Activated naive CD4-positive, alpha-beta T cell treated with anti-CD3 and anti-CD28 coated beads, Interleukin-2, amount 10 ng/mL, durations not matched to agents 7 days and 5 days (primary cell): ENCODE measurements at regions of chr1 and their contacts with region 1.

Region 1: GRCh38 chr1:67766141-67766978 is 66.9 kb downstream of the GNG12 start:
- DNase-seq: peak; percentile 53
- H3K4me3 Mint-ChIP-seq: no peak overlapping the region
- H3K27ac Mint-ChIP-seq: no peak overlapping the region
- H3K4me1 Mint-ChIP-seq: peaks cover 4% of the 10 kb centered on the region
- H3K27me3 Mint-ChIP-seq: peaks cover 37% of the 10 kb centered on the region

Region 2: DNA sequence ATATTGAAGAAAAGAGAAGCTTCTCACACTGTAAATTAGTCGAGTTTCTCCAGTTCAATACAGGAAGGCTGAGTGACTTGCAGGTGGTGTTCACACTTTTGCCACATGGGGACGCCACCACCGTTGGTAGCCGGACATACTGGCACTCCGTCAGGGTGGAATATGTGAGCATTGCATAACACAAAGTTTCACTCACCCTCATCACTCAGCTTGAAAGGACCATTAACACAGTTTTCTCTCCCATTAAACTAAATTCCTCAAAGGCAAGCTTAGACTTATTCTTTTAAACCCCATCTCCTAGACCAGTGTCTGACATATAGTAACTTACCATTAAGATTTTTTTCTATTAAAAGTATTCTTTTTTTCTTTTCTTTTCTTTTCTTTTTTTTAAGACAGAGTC is 230.9 kb before region 1 on chr1:
- CTCF ChIA-PET with region 1: interaction called, 86 read pairs
- DNase-seq: peak; percentile 66
- H3K4me3 Mint-ChIP-seq: no peak overlapping the region
- H3K27ac Mint-ChIP-seq: no peak overlapping the region
- H3K4me1 Mint-ChIP-seq: no peaks in the 10 kb centered on the region
- H3K27me3 Mint-ChIP-seq: peaks cover 6% of the 10 kb centered on the region

Region 3: GRCh38 chr1:67561704-67562113 is 204.7 kb before region 1 on chr1:
- CTCF ChIA-PET with region 1: interaction called, 158 read pairs
- DNase-seq: peak; percentile 91
- H3K4me3 Mint-ChIP-seq: no peak overlapping the region
- H3K27ac Mint-ChIP-seq: no peak overlapping the region
- H3K4me1 Mint-ChIP-seq: no peaks in the 10 kb centered on the region
- H3K27me3 Mint-ChIP-seq: peaks cover 14% of the 10 kb centered on the region

Region 4: DNA sequence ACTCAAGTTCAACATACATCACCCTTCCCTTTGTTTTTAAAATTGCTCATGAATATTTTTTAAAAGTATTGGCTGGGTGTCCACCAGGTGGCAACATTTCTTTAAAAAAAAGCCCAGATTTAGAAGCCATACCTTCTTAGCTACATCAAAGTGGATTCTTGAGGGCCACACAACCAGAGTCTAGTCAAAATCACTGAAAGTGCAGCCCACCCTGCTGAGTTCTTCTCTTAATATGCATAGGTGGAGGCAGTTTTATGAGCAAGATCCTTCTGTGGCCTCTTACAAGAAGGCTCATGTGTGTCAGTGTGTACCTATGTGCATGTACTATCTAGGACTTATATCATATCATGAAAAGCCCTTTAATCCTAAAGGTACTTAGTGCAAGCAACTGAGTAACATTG is 83.8 kb after region 1 on chr1:
- CTCF ChIA-PET with region 1: interaction called, 13 read pairs
- DNase-seq: no peak
- H3K4me3 Mint-ChIP-seq: no peak overlapping the region
- H3K27ac Mint-ChIP-seq: no peak overlapping the region
- H3K4me1 Mint-ChIP-seq: no peaks in the 10 kb centered on the region
- H3K27me3 Mint-ChIP-seq: peaks cover 19% of the 10 kb centered on the region